Transverse colon (tissue), 4 donors: ENCODE measurements at regions of chr3 and their contacts with region 1.

Region 1: GRCh38 chr3:97793420-97794019 is 28.3 kb upstream of the CRYBG3 start:
- DNase-seq: no peak
- H3K4me3 ChIP-seq: no peak overlapping the region
- H3K27ac ChIP-seq: no peak overlapping the region
- H3K4me1 ChIP-seq: no peaks in the 10 kb centered on the region
- H3K27me3 ChIP-seq: no peaks in the 10 kb centered on the region
- CTCF ChIP-seq: peak; percentile 78 to 83 (median 81)
- EP300 ChIP-seq: no peak
- POLR2A ChIP-seq: no peak

Region 2: GRCh38 chr3:97942801-97943546 is 149.5 kb after region 1 on chr3:
- in situ Hi-C with region 1: no loop called
- intact Hi-C with region 1: no loop called
- DNase-seq: no peak
- H3K4me3 ChIP-seq: no peak overlapping the region
- H3K27ac ChIP-seq: no peak overlapping the region
- H3K4me1 ChIP-seq: peaks cover 0 to 5% (median 0%) of the 10 kb centered on the region in 4 donors
- H3K27me3 ChIP-seq: no peaks in the 10 kb centered on the region
- CTCF ChIP-seq: no peak
- EP300 ChIP-seq: no peak
- POLR2A ChIP-seq: no peak

Region 3: GRCh38 chr3:97971677-97972567 is 178.4 kb after region 1 on chr3 and contains the start of gene RIOX2:
- in situ Hi-C with region 1: no loop called
- intact Hi-C with region 1: loop called (anchors 5 kb)
- DNase-seq: peak; percentile 84
- H3K4me3 ChIP-seq: peak within 1 kb of the TSS; percentile 72 to 87 (median 84)
- H3K27ac ChIP-seq: peak within 1 kb of the TSS; percentile 86 to 95 (median 92)
- H3K4me1 ChIP-seq: peaks cover 4 to 29% (median 15%) of the 10 kb centered on the region in 4 donors
- H3K27me3 ChIP-seq: no peaks in the 10 kb centered on the region
- CTCF ChIP-seq: peak in 1 of 5 experiments; percentile 16
- EP300 ChIP-seq: no peak
- POLR2A ChIP-seq: no peak
- total RNA-seq, gene RIOX2: 7.5 to 20.5 (median 13.3) TPM

Region 4: GRCh38 chr3:98003306-98003969 is 209.9 kb after region 1 on chr3:
- in situ Hi-C with region 1: no loop called
- intact Hi-C with region 1: no loop called
- DNase-seq: no peak
- H3K4me3 ChIP-seq: no peak overlapping the region
- H3K27ac ChIP-seq: no peak overlapping the region
- H3K4me1 ChIP-seq: no peaks in the 10 kb centered on the region
- H3K27me3 ChIP-seq: no peaks in the 10 kb centered on the region
- CTCF ChIP-seq: no peak
- EP300 ChIP-seq: no peak
- POLR2A ChIP-seq: no peak

Region 5: DNA sequence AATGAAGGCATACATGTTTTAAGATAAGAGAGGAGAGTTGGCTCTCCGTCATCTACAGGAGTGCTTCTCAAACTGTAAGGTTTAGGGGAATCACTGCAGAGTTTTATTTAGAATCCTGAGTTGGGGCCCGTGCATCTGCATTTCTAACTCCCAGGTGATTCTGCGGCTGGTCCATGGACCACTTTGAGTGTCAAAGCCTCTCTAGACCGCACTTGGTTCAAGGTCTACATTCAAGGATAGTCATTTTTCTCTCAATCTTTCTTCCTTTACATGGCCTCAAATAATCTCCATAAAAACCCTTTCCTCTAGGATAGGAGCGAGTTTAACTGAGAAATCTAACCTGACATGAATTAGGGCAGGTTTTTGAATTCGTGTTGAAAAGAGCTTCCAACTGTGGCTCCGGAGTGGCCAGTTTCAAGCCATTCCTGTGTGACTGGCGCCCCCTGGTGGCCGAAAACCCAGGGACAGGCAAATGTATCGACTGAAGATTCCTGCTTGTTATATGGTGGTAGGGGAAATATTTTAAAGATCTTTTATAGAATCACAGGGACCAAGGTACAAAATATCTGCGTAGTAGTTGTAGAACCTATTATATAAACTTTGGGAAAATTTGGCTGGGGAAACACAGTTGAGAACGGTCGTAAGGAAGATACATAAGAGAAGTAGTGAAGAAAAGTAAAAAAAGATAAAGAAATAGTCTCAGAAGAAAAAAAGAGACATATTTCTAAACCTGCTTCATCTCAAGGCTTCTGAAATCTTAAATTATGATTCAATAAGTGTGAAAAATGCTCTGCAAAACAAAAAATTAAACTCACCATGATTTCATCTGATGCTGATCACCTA is 229.7 kb after region 1 on chr3:
- in situ Hi-C with region 1: loop called (anchors 5 to 10 kb)
- intact Hi-C with region 1: loop called (anchors 2 kb)
- DNase-seq: peak; percentile 90
- H3K4me3 ChIP-seq: no peak overlapping the region
- H3K27ac ChIP-seq: no peak overlapping the region
- H3K4me1 ChIP-seq: peaks cover 0 to 9% (median 6%) of the 10 kb centered on the region in 4 donors
- H3K27me3 ChIP-seq: no peaks in the 10 kb centered on the region
- CTCF ChIP-seq: peak; percentile 92 to 98 (median 97)
- EP300 ChIP-seq: no peak
- POLR2A ChIP-seq: no peak

Region 6: GRCh38 chr3:98329392-98330124 is 536.0 kb after region 1 on chr3:
- in situ Hi-C with region 1: loop called in 2 of 4 experiments (anchors 25 kb)
- intact Hi-C with region 1: no loop called
- DNase-seq: peak; percentile 15
- H3K4me3 ChIP-seq: no peak overlapping the region
- H3K27ac ChIP-seq: no peak overlapping the region
- H3K4me1 ChIP-seq: no peaks in the 10 kb centered on the region
- H3K27me3 ChIP-seq: no peaks in the 10 kb centered on the region
- CTCF ChIP-seq: peak; percentile 45 to 61 (median 50)
- EP300 ChIP-seq: no peak
- POLR2A ChIP-seq: no peak